Posterior vena cava (tissue), 2 donors: ENCODE measurements at regions of chr12 and their contacts with region 1.

Region 1: DNA sequence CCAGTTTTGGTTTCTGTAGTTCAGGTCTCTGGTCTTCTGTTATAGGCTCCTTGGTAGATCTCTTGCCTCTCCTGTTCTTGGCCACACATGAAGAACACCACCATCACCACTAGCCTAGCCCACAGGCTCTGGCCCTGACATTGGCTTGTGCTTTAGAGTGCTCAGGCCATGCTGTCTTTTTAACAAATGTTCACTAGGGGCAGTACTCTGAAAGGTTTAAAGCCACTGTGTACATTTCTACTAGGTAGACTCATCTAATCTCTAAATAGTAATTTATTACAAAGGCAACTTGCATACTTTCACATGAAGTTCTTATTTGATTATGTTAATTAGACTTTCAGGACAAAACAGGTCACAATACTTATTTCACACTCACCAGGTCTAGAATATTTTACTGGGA is 38.3 kb downstream of the PDE6H start:
- DNase-seq: no peak

Region 2: DNA sequence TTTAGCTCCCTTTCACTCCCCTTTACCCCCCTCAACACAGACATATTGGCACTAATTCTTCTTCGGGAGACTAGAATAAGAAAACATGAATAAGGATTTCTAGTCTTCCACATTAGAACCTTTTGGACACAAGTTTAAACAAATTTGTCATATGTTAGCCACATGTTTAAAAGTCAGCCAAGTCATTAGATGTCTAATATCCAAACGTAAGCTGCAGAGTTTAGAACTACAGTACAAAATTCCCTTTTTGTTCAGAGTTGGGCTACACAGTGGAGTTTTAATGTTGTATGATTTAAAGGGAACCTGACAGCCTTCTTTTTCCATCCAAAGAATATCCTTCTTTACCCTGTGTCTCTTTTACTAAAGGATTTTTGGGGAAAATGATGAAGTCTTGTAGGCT is 41.5 kb after region 1 on chr12:
- intact Hi-C with region 1: loop called in 1 of 2 experiments (anchors 2 kb)
- DNase-seq: no peak